Mammary epithelial cell (primary cell): ENCODE measurements at regions of chrX and their contacts with region 1.

Region 1: GRCh38 chrX:134692990-134693389 is 34.7 kb upstream of the PLAC1 start:
- DNase-seq: peak; percentile 61
- H3K4me3 ChIP-seq: no peak overlapping the region
- H3K27ac ChIP-seq: no peak overlapping the region
- H3K4me1 ChIP-seq: peaks cover 33% of the 10 kb centered on the region
- H3K27me3 ChIP-seq: no peaks in the 10 kb centered on the region
- CTCF ChIP-seq: no peak

Region 2: GRCh38 chrX:134020910-134021309 is 672.1 kb before region 1 on chrX:
- CTCF ChIA-PET with region 1: no interaction called
- dilution Hi-C with region 1: no loop called
- in situ Hi-C with region 1: no loop called
- intact Hi-C with region 1: no loop called
- DNase-seq: no peak
- H3K4me3 ChIP-seq: no peak overlapping the region
- H3K27ac ChIP-seq: no peak overlapping the region
- H3K4me1 ChIP-seq: no peaks in the 10 kb centered on the region
- H3K27me3 ChIP-seq: no peaks in the 10 kb centered on the region
- CTCF ChIP-seq: peak in 1 of 2 donors; percentile 29

Region 3: GRCh38 chrX:134548257-134549201 is 144.5 kb before region 1 on chrX:
- CTCF ChIA-PET with region 1: no interaction called
- dilution Hi-C with region 1: no loop called
- in situ Hi-C with region 1: no loop called
- intact Hi-C with region 1: loop called (anchors 1 kb)
- DNase-seq: no peak
- H3K4me3 ChIP-seq: peak overlapping the region; percentile 53 to 66 (median 60)
- H3K27ac ChIP-seq: peak overlapping the region; percentile 42
- H3K4me1 ChIP-seq: peaks cover 11% of the 10 kb centered on the region
- H3K27me3 ChIP-seq: no peaks in the 10 kb centered on the region
- CTCF ChIP-seq: no peak

Region 4: DNA sequence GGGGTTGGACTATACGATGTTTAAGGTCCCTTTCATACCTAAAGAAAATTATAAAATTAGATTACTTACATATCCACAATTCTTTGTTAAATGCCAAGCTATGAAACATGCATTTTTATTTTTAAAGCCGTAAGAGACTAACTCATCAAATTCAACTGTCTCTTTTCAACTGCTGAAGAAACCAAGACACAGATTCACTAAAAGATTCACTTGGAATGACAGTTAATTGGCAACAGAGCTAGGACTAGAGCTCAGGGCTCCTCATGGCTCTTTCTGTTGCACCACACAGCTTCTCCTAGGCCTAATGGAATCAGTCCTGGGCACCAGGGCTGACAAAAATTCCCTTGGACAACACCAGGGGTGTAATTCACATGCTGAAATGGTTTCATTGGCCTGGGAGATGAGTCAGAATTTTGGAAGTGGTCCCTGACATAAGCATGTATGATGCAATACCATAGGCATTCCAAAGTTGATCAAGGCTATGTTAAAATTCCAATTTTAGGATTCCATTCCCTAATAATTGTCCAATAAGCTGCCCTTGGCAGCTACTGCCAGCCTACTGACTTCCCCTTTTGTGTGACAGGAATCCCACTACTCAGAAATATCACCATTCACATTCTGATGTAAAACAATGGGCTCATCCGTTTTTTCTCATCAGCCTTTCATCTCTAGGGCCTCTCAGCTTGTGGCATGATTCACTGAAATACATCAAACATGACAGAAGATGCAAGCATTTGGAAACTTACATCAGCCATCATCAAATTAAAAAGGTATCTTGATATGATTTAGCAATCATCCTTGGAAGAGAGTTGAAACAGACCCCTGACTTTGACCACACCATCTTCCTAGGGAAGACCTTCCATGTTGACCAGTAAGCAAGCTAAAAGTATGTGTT is 88.9 kb before region 1 on chrX:
- CTCF ChIA-PET with region 1: no interaction called
- dilution Hi-C with region 1: no loop called
- in situ Hi-C with region 1: no loop called
- intact Hi-C with region 1: loop called (anchors 1 kb)
- DNase-seq: peak; percentile 74
- H3K4me3 ChIP-seq: no peak overlapping the region
- H3K27ac ChIP-seq: peak overlapping the region; percentile 68
- H3K4me1 ChIP-seq: peaks cover 26% of the 10 kb centered on the region
- H3K27me3 ChIP-seq: no peaks in the 10 kb centered on the region
- CTCF ChIP-seq: peak; percentile 18 to 48

Region 5: GRCh38 chrX:134670134-134670924 is 22.7 kb before region 1 on chrX:
- CTCF ChIA-PET with region 1: no interaction called
- dilution Hi-C with region 1: no loop called
- in situ Hi-C with region 1: no loop called
- intact Hi-C with region 1: loop called (anchors 1 kb)
- DNase-seq: peak; percentile 80
- H3K4me3 ChIP-seq: no peak overlapping the region
- H3K27ac ChIP-seq: peak overlapping the region; percentile 52
- H3K4me1 ChIP-seq: peaks cover 22% of the 10 kb centered on the region
- H3K27me3 ChIP-seq: no peaks in the 10 kb centered on the region
- CTCF ChIP-seq: no peak

Region 6: DNA sequence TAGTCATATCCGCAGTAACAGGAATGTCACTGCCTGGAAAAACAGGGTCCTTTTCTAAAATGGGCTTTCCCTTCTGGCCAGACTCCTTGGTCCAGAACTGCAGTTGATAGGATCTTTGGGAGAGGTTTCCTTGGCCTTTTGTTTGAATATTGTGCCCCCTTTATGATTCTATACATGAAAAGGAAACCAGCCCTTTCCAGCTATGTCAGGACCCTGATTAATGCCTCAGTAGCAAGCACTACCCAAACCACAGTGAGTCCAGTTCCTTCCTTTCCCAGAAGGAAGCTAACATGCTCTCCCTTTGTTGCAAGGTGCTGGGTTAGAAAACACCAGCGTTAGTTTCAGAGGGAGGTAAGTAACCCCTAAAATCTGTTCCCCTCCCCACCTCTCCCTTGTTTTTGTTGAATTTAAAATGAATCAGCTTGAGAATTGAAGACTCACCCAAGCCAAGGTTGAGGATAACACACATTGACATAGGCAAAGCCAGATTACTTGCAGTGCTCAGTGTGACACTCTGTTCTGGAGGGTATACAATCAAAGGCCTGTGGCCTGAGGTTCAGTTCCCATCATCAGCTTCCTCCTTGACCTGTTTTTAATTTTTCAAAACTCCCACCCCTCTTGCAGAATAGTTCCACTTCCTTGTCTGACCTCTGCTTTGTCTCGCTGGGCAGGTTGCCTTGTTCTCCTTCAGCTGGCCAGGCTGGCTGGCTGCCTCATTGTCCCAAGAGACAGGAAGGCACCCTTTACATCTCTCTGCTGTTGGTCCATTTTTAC is 52.8 kb after region 1 on chrX:
- CTCF ChIA-PET with region 1: no interaction called
- dilution Hi-C with region 1: loop called (anchors 5 kb)
- in situ Hi-C with region 1: no loop called
- intact Hi-C with region 1: no loop called
- DNase-seq: no peak
- H3K4me3 ChIP-seq: no peak overlapping the region
- H3K27ac ChIP-seq: no peak overlapping the region
- H3K4me1 ChIP-seq: no peaks in the 10 kb centered on the region
- H3K27me3 ChIP-seq: no peaks in the 10 kb centered on the region
- CTCF ChIP-seq: no peak

Region 7: GRCh38 chrX:134764212-134764785 is 71.3 kb after region 1 on chrX:
- CTCF ChIA-PET with region 1: no interaction called
- dilution Hi-C with region 1: no loop called
- in situ Hi-C with region 1: no loop called
- intact Hi-C with region 1: loop called (anchors 5 kb)
- DNase-seq: peak; percentile 30
- H3K4me3 ChIP-seq: no peak overlapping the region
- H3K27ac ChIP-seq: no peak overlapping the region
- H3K4me1 ChIP-seq: peaks cover 6% of the 10 kb centered on the region
- H3K27me3 ChIP-seq: no peaks in the 10 kb centered on the region
- CTCF ChIP-seq: peak; percentile 29 to 31

Region 8: GRCh38 chrX:134807039-134807731 is 114.2 kb after region 1 on chrX:
- CTCF ChIA-PET with region 1: no interaction called
- dilution Hi-C with region 1: no loop called
- in situ Hi-C with region 1: no loop called
- intact Hi-C with region 1: no loop called
- DNase-seq: peak; percentile 75
- H3K4me3 ChIP-seq: peak overlapping the region; percentile 55 to 64 (median 64)
- H3K27ac ChIP-seq: peak overlapping the region; percentile 40
- H3K4me1 ChIP-seq: no peaks in the 10 kb centered on the region
- H3K27me3 ChIP-seq: no peaks in the 10 kb centered on the region
- CTCF ChIP-seq: no peak

Region 9: DNA sequence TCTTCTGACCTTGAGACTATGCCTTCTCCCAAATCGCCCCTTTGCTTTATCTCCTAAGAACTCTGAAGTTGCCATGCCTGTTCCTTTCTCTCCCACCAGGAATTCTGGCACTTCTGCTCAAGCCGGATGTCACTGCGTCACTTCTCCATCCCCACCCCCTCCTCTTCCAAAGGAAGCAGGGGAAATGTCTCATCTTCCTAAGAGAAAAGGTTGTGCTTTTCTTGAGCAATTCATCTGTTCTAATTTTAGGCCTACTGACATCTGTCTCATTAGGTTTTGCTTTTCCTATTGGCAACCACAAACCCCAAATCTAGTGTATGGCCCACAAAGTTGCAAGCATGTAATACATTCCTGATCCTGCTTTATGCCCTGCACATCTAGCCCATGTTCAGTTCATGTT is 128.4 kb after region 1 on chrX:
- CTCF ChIA-PET with region 1: no interaction called
- dilution Hi-C with region 1: no loop called
- in situ Hi-C with region 1: no loop called
- intact Hi-C with region 1: no loop called
- DNase-seq: no peak
- H3K4me3 ChIP-seq: no peak overlapping the region
- H3K27ac ChIP-seq: no peak overlapping the region
- H3K4me1 ChIP-seq: no peaks in the 10 kb centered on the region
- H3K27me3 ChIP-seq: no peaks in the 10 kb centered on the region
- CTCF ChIP-seq: no peak